K562 (cell line): ENCODE measurements at regions of chr7 and their contacts with region 1.

Region 1: DNA sequence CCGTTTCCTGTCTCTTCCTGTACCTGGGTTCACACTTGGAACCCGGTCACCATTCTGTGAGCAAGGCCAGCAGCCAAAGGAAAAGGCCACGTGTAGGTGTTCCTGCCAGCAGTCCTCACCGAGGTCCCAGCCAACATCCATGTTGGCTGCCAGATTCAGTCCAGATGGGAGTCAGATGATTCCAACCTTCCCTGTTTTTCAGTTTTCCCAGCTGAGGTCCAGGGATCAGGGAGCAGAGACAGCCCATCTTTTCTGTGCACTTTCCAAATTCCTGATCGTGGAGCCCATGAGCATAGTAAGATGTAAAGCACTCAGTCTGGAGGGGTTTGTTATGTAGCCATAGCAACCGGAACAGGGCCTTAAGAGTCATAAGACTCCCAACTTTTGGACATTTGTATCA is 3.9 kb upstream of the PVRIG start:
- DNase-seq: no peak
- ATAC-seq: no peak
- H3K4me3 ChIP-seq: no peak overlapping the region
- H3K27ac ChIP-seq: no peak overlapping the region
- H3K4me1 ChIP-seq: peaks cover 4 to 15% of the 10 kb centered on the region in 2 experiments; a peak in 4 of 5 replicates
- H3K27me3 ChIP-seq: no peaks in the 10 kb centered on the region
- CTCF ChIP-seq: no peak
- EP300 ChIP-seq: no peak
- POLR2A ChIP-seq: no peak
- RAD21 ChIP-seq: no peak

Region 2: GRCh38 chr7:99997545-99998137 is 218.3 kb before region 1 on chr7:
- CTCF ChIA-PET with region 1: no interaction called
- POLR2A ChIA-PET with region 1: no interaction called
- in situ Hi-C with region 1: loop called (anchors 10 kb)
- intact Hi-C with region 1: loop called (anchors 10 kb)
- DNase-seq: no peak
- ATAC-seq: no peak
- H3K4me3 ChIP-seq: no peak overlapping the region
- H3K27ac ChIP-seq: no peak overlapping the region
- H3K4me1 ChIP-seq: peaks cover 2 to 13% of the 10 kb centered on the region in 2 experiments; a peak in 3 of 5 replicates
- H3K27me3 ChIP-seq: peaks cover 25 to 40% of the 10 kb centered on the region in 2 experiments; a peak in 4 of 5 replicates
- CTCF ChIP-seq: no peak
- EP300 ChIP-seq: no peak
- POLR2A ChIP-seq: no peak
- RAD21 ChIP-seq: no peak

Region 3: DNA sequence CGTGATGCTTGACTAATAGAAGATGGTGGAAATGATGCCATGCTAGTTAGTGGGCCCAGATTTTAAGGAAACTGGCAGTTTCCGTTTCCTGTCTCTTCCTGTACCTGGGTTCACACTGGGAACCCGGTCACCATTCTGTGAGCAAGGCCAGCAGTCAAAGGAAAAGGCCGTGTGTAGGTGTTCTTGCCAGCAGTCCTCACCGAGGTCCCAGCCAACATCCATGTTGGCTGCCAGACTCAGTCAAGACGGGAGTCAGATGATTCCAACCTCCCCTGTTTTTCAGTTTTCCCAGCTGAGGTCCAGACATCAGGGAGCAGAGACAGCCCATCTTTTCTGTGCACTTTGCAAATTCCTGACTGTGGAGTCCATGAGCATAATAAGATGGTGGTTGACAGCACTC is 126.9 kb after region 1 on chr7:
- CTCF ChIA-PET with region 1: no interaction called
- POLR2A ChIA-PET with region 1: no interaction called
- in situ Hi-C with region 1: loop called (anchors 5 kb)
- intact Hi-C with region 1: no loop called
- DNase-seq: no peak
- ATAC-seq: no peak
- H3K4me3 ChIP-seq: no peak overlapping the region
- H3K27ac ChIP-seq: peak overlapping the region; percentile 34; the same call in 1 of the 3 replicates
- H3K4me1 ChIP-seq: peaks cover 9 to 13% of the 10 kb centered on the region in 2 experiments; a peak in 4 of 5 replicates
- H3K27me3 ChIP-seq: no peaks in the 10 kb centered on the region
- CTCF ChIP-seq: no peak
- EP300 ChIP-seq: no peak
- POLR2A ChIP-seq: no peak
- RAD21 ChIP-seq: no peak

Region 4: DNA sequence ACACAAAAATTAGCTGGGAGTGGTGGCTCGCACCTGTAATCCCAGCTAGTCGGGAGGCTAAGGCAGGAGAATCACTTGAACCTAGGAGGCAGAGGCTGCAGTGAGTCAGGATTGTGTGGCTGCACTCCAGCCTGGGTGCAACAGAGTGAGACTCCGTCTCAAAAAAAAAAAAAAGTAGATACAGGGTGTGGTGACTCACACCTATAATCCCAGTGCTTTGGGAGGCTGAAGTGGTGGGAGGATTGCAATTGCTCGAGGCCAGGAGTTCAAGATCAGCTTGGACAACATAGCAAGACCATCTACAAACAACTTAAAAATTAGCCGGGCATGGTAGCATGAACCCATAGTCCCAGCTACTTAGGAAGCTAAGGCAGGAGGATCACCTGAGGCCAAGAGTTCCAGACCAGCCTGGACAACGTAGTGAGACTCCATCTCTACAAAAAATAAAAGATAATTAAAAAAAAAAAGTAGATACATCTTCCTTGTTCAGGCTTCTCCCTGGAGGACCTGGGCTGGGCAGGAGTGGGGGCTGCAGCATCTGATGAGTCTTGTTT is 398.5 kb after region 1 on chr7:
- CTCF ChIA-PET with region 1: no interaction called
- POLR2A ChIA-PET with region 1: no interaction called
- in situ Hi-C with region 1: no loop called
- intact Hi-C with region 1: no loop called
- DNase-seq: no peak
- ATAC-seq: no peak
- H3K4me3 ChIP-seq: no peak overlapping the region
- H3K27ac ChIP-seq: no peak overlapping the region
- H3K4me1 ChIP-seq: peaks cover 19 to 28% of the 10 kb centered on the region in 2 experiments; a peak in 4 of 5 replicates
- H3K27me3 ChIP-seq: no peaks in the 10 kb centered on the region
- CTCF ChIP-seq: no peak
- EP300 ChIP-seq: no peak
- POLR2A ChIP-seq: no peak
- RAD21 ChIP-seq: no peak